ENCODE measurements at regions of chr19 and their contacts with region 1.

Region 1: DNA sequence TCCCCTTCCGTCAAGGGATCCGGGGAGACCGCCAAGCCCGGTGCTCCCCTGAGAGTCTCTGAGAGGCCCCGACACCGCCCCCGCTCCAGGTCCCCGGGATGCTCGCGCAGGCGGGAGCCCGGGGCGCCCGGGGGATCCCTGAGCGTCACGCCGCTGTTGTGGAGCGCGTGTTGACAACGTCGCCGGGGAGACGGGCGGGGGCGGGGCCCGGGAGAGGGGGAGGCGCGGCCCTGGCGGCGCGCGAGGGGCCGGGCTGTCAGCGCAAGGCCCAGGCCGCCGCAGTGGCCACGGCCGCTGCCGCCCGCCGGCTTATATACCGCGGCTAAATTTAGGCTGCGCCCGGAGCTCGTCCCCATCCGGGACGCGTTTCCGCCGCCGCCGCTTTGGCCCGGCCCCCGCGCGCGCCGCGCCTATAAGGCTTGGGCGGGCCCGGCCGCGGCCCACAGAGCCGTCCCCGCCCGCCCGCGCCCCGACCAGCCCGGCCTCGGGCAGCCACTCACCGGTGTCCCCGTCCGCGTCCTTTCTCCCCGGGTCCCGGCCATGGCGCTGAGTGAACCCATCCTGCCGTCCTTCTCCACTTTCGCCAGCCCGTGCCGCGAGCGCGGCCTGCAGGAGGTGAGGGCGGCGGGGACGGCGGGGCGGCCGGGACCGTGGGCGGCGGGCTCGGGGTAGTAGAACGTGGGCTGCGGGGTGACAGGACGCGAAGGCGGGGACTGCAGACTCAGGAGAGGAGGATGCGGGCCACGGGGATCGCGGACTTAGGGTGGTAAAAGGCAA is at the start of gene KLF2:
- DNase-seq: no peak
- ATAC-seq: peak; percentile 76
- H3K4me3 ChIP-seq: peak within 1 kb of the TSS; percentile 76; the same call in 1 of the 2 replicates
- H3K27ac ChIP-seq: no peak within 1 kb of the TSS
- H3K4me1 ChIP-seq: peaks cover 25% of the 10 kb centered on the region
- H3K27me3 ChIP-seq: peaks cover 0 to 5% of the 10 kb centered on the region in 2 experiments; a peak in 1 of 4 replicates
- CTCF ChIP-seq: no peak
- EP300 ChIP-seq: peak in 1 of 2 experiments; percentile 72; a peak in 2 of 4 replicates
- POLR2A ChIP-seq: peak; percentile 93
- RAD21 ChIP-seq: no peak
- polyA plus RNA-seq, gene KLF2: 0.16 to 0.71 TPM

Region 2: GRCh38 chr19:16301999-16302694 is 22.4 kb before region 1 on chr19:
- CTCF ChIA-PET with region 1: no interaction called
- POLR2A ChIA-PET with region 1: no interaction called
- RAD21 ChIA-PET with region 1: no interaction called
- SMC1A ChIA-PET with region 1: interaction called, 5 read pairs
- in situ Hi-C with region 1: no loop called
- intact Hi-C with region 1: loop called (anchors 1 kb)
- DNase-seq: no peak
- ATAC-seq: peak; percentile 59
- H3K4me3 ChIP-seq: no peak overlapping the region
- H3K27ac ChIP-seq: no peak overlapping the region
- H3K4me1 ChIP-seq: peaks cover 7% of the 10 kb centered on the region
- H3K27me3 ChIP-seq: no peaks in the 10 kb centered on the region; a peak in 1 of 4 replicates
- CTCF ChIP-seq: no peak
- EP300 ChIP-seq: no peak
- POLR2A ChIP-seq: no peak
- RAD21 ChIP-seq: no peak

Measured in GM12878 (cell line).